Common myeloid progenitor, CD34-positive (primary cell): ENCODE measurements at regions of chr20 and their contacts with region 1.

Region 1: GRCh38 chr20:40970201-40970600 is 58.4 kb upstream of the TOP1 start:
- DNase-seq: no peak
- H3K4me3 ChIP-seq: no peak overlapping the region
- H3K27ac ChIP-seq: no peak overlapping the region
- H3K4me1 ChIP-seq: peaks cover 0 to 12% (median 8%) of the 10 kb centered on the region in 4 experiments
- H3K27me3 ChIP-seq: peaks cover 0 to 4% (median 0%) of the 10 kb centered on the region in 5 experiments

Region 2: GRCh38 chr20:40980106-40980827 is 10.1 kb after region 1 on chr20:
- CTCF ChIA-PET with region 1: interaction called, 14 read pairs
- POLR2A ChIA-PET with region 1: no interaction called
- DNase-seq: no peak
- H3K4me3 ChIP-seq: no peak overlapping the region
- H3K27ac ChIP-seq: no peak overlapping the region
- H3K4me1 ChIP-seq: no peaks in the 10 kb centered on the region
- H3K27me3 ChIP-seq: peaks cover 0 to 12% (median 0%) of the 10 kb centered on the region in 5 experiments

Region 3: DNA sequence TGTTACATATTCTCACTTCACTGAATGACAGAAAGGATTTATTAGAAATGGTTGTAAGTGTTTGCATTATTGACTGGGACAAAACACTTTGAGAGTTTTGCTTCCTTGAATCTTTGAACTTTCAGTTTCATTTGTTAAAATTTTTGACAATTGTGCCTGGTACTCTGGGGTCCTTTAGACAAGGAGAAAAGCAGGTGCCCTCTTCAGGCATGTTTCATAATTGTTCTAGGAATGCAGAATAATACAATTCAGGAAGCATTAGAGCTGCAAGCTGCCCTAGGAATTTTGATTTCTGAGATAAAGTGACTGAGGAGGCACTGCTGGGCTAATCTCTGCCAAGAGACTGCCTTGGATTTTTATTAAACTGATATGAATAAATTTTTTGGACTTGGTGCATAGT is 108.1 kb after region 1 on chr20:
- CTCF ChIA-PET with region 1: interaction called, 12 read pairs
- POLR2A ChIA-PET with region 1: no interaction called
- DNase-seq: peak; percentile 58 to 68 (median 65)
- H3K4me3 ChIP-seq: peak overlapping the region in 2 of 7 experiments; percentile 46 to 52
- H3K27ac ChIP-seq: no peak overlapping the region
- H3K4me1 ChIP-seq: peaks cover 11 to 75% (median 29%) of the 10 kb centered on the region in 4 experiments
- H3K27me3 ChIP-seq: no peaks in the 10 kb centered on the region

Region 4: DNA sequence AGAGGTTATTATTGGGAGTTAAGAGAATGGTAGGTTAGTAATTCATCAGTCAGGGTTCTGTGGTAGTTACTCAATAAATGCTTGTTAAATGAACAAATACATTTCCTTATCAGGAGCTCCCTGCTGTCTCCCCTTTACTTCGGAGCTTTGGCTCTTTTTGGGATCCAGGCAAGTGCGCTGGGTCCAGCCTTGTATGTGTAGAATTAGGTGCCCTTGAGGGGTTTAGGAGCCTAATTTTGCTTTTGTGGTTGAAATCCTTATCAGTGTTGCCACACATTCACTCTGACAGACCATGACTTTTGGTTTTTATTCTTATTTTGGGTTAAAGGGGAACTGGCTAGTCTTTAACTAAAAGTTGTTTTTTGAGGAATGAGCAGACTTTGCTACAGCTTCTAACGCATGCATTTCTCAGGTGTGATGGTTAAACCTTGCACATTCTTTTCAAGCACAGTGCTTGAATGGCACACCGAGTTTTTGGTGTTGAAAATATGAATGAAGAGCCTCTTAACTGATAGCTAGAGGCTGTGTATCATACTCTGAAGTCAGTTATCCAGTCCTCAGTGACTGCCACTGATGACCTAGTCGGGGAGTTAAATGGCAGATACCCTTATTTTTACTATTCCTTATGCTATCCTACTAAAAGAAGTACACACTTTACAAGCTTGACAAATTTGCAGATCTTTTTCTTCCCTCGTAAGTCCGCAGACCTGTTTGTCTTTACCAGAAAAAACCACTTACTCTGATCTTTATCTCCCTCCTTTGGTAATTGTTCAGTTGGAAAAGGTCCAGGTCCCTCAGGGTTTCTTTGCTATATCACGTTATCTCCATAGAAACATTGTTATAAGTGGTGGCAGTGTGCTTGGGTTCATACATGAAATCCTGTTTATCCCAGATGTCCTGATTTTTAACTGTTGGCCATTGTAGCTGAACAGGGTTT is 116.5 kb after region 1 on chr20:
- CTCF ChIA-PET with region 1: interaction called, 165 read pairs
- POLR2A ChIA-PET with region 1: no interaction called
- DNase-seq: peak; percentile 80 to 95 (median 92)
- H3K4me3 ChIP-seq: peak overlapping the region in 4 of 7 experiments; percentile 21 to 63 (median 33)
- H3K27ac ChIP-seq: peak overlapping the region; percentile 55 to 79
- H3K4me1 ChIP-seq: peaks cover 16 to 43% (median 24%) of the 10 kb centered on the region in 4 experiments
- H3K27me3 ChIP-seq: no peaks in the 10 kb centered on the region